MCF 10A (cell line): ENCODE measurements at regions of chr20 and their contacts with region 1.

Region 1: GRCh38 chr20:45450097-45450818 is 19.3 kb upstream of the WFDC2 start:
- DNase-seq: peak; percentile 55
- H3K4me3 Mint-ChIP-seq: no peak overlapping the region
- H3K27ac Mint-ChIP-seq: no peak overlapping the region
- H3K4me1 Mint-ChIP-seq: no peaks in the 10 kb centered on the region
- H3K27me3 Mint-ChIP-seq: peaks cover 1% of the 10 kb centered on the region
- CTCF ChIP-seq: peak; percentile 47

Region 2: DNA sequence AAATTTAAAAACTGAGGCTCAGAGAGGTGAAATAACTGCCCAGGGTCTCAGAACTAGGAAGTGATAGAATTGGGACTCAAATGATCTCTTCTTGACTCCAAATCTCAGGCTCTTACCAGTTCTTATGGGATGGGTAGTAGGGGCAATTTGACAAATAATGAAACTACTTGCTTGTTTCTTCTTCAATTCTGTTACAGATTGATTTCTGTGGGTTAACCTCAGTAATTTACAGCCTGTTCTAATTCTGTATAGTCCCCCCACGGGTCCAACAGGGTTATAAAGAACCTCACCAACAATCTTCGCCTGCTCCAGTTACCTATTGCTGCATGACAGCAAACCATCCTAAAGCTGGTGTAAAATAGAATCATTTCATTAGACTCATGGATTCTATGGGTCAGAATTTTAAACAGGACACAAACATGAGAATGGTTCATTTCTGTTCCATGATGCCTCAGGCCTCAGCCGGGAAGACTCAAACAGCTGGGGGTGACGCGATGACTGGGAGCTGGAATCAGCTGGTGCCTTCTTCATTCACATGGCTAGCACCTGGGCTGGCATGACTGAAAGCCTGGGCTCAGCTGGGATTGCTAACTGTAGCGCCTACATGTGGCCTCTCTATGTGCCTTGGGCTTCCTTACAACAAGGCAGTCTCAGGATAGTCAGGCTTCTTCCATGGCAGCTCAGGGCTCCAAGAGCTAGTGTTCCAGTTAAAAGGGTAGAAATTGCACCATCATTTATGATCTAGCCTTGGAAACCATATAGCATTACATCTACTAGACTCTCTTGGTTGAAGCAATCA is 12.7 kb after region 1 on chr20:
- CTCF ChIA-PET with region 1: interaction called, 14 read pairs
- POLR2A ChIA-PET with region 1: interaction called, 3 read pairs
- intact Hi-C with region 1: no loop called
- DNase-seq: no peak
- H3K4me3 Mint-ChIP-seq: no peak overlapping the region
- H3K27ac Mint-ChIP-seq: no peak overlapping the region
- H3K4me1 Mint-ChIP-seq: no peaks in the 10 kb centered on the region
- H3K27me3 Mint-ChIP-seq: no peaks in the 10 kb centered on the region
- CTCF ChIP-seq: no peak